ENCODE measurements at regions of chr5 and their contacts with region 1.

Region 1: GRCh38 chr5:96614110-96614691 is 48.0 kb upstream of the CAST start:
- DNase-seq: peak; percentile 96
- ATAC-seq: peak; percentile 93
- H3K4me3 ChIP-seq: peak overlapping the region in 1 of 2 experiments; percentile 26; a peak in 2 of 4 replicates
- H3K27ac ChIP-seq: no peak overlapping the region
- H3K4me1 ChIP-seq: no peaks in the 10 kb centered on the region; the same call in 1 of the 2 replicates
- H3K27me3 ChIP-seq: peaks cover 3% of the 10 kb centered on the region; the same call in 1 of the 2 replicates
- CTCF ChIP-seq: peak; percentile 66

Region 2: DNA sequence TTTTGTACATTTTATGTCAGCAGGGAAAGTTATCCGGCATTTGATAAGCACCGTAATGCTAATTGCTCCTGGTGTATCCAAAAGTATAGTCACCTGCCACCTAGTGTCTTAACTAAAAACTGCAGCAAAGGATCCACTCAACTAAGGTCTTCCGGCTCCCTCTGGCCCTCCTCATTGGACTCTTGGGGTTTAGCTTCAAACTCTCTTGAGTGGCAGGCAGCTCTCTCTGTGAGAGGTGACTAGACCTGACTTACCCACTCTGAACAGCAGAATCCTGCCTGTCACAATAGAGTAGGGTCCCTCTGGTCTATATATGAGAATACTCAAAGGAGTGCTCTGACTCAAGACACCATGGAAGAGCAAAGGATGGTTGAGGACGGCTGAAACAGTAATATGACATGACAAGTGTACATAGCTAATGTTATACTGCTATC is 12.4 kb before region 1 on chr5:
- CTCF ChIA-PET with region 1: no interaction called
- POLR2A ChIA-PET with region 1: no interaction called
- in situ Hi-C with region 1: no loop called
- intact Hi-C with region 1: no loop called
- DNase-seq: peak; percentile 67
- ATAC-seq: peak; percentile 92
- H3K4me3 ChIP-seq: no peak overlapping the region
- H3K27ac ChIP-seq: no peak overlapping the region
- H3K4me1 ChIP-seq: no peaks in the 10 kb centered on the region
- H3K27me3 ChIP-seq: peaks cover 3% of the 10 kb centered on the region
- CTCF ChIP-seq: peak; percentile 84

Region 3: DNA sequence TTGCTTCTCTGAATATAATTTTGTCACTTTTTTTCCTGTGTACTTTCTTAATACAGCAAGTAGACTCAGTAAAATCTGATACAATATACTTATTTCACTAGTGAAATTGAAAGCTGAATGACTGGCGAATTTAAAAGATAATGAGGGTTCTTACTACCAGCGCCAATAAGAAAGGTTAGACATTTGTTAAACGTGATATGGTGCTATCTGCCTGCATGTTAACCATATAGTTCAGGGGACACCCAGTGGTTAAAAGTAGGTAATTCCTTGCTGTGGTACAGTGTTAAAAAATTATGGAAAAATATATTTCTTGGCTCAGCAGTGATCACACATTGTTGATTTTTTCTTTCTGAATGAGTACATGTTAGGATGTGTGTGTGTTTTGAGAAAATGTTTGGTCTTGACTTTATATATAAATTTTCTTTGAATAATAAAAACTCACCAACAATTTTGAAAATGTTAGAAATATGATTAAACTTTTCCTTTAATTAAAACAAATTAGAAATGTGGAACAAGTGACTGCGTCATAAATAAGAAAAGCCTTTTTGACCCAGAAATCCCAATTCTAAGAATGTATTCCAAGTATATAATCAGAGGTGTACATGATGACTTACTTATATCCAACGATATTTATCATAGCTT is 73.7 kb after region 1 on chr5:
- CTCF ChIA-PET with region 1: no interaction called
- POLR2A ChIA-PET with region 1: no interaction called
- in situ Hi-C with region 1: no loop called
- intact Hi-C with region 1: loop called (anchors 2 kb)
- DNase-seq: no peak
- ATAC-seq: peak; percentile 94
- H3K4me3 ChIP-seq: no peak overlapping the region
- H3K27ac ChIP-seq: no peak overlapping the region
- H3K4me1 ChIP-seq: no peaks in the 10 kb centered on the region
- H3K27me3 ChIP-seq: no peaks in the 10 kb centered on the region
- CTCF ChIP-seq: peak; percentile 66; the same call in 1 of the 2 replicates

Region 4: DNA sequence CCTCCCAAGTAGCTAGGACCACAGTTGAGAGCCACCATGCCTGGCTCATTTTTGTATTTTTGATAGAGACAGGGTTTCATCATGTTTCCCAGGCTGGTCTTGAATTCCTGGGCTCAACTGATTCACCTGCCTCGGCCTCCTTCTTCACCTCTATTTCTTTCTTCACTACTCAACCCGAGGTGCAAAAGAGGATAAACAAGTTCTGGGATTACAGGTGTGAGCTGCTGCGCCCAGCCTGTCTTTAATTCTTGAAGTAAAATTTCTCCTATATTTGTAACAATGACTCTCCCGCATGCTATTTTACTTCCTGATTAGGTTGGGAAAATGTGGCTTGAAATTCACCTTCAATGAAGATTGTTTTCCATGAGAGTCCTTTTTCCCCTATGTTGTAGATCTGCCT is 94.4 kb after region 1 on chr5:
- CTCF ChIA-PET with region 1: interaction called, 13 read pairs
- POLR2A ChIA-PET with region 1: no interaction called
- in situ Hi-C with region 1: no loop called
- intact Hi-C with region 1: no loop called
- DNase-seq: no peak
- ATAC-seq: no peak
- H3K4me3 ChIP-seq: no peak overlapping the region
- H3K27ac ChIP-seq: no peak overlapping the region
- H3K4me1 ChIP-seq: peaks cover 12% of the 10 kb centered on the region
- H3K27me3 ChIP-seq: no peaks in the 10 kb centered on the region
- CTCF ChIP-seq: no peak

Region 5: GRCh38 chr5:96729156-96729555 is 115.0 kb after region 1 on chr5:
- CTCF ChIA-PET with region 1: interaction called, 3 read pairs
- POLR2A ChIA-PET with region 1: no interaction called
- in situ Hi-C with region 1: no loop called
- intact Hi-C with region 1: loop called (anchors 1 kb)
- DNase-seq: no peak
- ATAC-seq: no peak
- H3K4me3 ChIP-seq: no peak overlapping the region
- H3K27ac ChIP-seq: no peak overlapping the region
- H3K4me1 ChIP-seq: no peaks in the 10 kb centered on the region
- H3K27me3 ChIP-seq: no peaks in the 10 kb centered on the region
- CTCF ChIP-seq: peak; percentile 39; the same call in 1 of the 2 replicates

Region 6: DNA sequence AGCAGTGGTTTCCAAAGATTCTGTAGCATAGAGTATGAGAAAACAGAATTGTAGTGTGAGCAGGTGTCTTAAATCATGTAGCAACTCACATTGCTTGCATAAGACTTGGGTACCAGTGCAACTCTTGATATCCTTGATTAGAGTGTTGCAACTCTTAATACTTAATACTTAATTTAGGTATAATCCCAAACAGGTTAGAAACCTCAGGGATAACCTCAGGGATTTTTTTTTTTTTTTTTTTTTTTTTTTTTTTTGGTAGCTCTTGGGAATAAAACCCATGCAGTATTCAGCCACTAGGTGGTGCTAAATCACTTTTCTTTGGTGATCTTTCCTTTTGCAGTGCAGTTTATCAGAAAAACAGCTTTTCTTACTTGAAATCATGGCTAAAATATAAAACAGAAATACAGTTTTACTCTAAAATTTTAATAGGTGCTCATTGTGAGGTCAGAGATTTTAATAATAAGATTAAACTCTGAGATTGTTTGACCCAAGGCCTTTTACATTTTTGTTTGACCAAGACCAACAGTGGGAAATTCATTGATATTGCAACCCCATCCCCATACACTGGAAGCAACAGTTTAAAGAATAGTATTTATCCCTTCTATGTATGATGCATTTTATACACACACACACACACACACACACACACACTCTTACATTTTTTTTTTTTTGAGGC is 138.3 kb after region 1 on chr5:
- CTCF ChIA-PET with region 1: interaction called, 13 read pairs
- POLR2A ChIA-PET with region 1: no interaction called
- in situ Hi-C with region 1: no loop called
- intact Hi-C with region 1: loop called (anchors 10 kb)
- DNase-seq: peak; percentile 36
- ATAC-seq: no peak
- H3K4me3 ChIP-seq: no peak overlapping the region
- H3K27ac ChIP-seq: no peak overlapping the region
- H3K4me1 ChIP-seq: no peaks in the 10 kb centered on the region
- H3K27me3 ChIP-seq: no peaks in the 10 kb centered on the region
- CTCF ChIP-seq: peak; percentile 72; the same call in 1 of the 2 replicates